ENCODE measurements at regions of chr10 and their contacts with region 1.

Region 1: GRCh38 chr10:63175534-63175933 is 42.4 kb downstream of the NRBF2 start:
- DNase-seq: no peak

Region 2: DNA sequence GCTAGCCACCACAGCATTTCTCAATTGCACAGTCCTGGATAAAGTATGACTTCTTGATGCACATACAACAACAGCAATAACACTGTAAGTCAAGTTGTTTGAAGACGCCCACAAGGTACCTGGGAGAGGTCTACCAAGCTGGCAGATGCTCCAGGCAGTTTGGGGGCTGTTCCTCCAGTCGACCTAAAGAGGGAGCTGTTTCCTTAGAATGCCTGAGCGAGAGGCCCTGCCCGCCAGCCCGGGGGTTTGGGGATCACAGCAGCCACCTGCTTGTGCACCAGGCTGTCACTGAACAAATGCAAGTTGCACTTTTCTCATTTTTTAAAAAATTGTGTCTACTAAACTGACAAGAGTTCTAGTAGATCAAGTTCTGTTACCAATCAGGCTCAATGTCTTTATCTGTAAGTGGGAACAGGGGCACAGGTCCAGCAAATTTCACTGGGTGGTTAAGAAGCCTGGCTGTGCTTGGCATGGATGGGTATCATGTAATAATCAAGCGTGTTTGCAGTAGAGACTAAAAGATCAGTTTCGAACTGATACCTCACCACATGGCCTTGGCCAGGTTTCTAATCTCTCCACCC is 564.8 kb before region 1 on chr10:
- CTCF ChIA-PET with region 1: interaction called, 10 read pairs
- POLR2A ChIA-PET with region 1: no interaction called
- DNase-seq: peak; percentile 61

Region 3: GRCh38 chr10:63421591-63421990 is 246.1 kb after region 1 on chr10:
- CTCF ChIA-PET with region 1: no interaction called
- POLR2A ChIA-PET with region 1: no interaction called
- DNase-seq: no peak

Measured in HEK293T (cell line).